Breast epithelium (tissue), 4 donors: ENCODE measurements at regions of chr7 and their contacts with region 1.

Region 1: DNA sequence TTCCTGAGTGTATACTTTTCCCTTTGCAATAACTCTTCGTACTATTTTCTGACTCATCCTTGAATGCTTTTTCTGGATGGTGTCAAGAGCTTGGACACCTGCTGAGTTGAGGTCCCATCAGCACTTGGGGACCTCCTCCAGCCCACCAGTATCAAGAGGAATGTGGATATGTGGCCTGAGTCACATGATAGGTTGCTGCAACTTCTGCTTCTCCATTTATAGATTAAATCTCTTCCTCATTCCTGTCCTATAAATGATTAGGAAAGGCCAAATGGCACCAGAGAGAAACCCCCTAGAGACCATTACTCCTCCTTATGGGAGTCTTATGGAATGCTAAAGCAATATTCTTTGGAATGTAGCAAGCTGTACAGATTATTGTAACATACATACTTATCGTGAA is 85.6 kb downstream of the NEUROD6 start:
- DNase-seq: no peak
- H3K4me3 ChIP-seq: no peak overlapping the region
- H3K27ac ChIP-seq: no peak overlapping the region
- H3K4me1 ChIP-seq: no peaks in the 10 kb centered on the region
- H3K27me3 ChIP-seq: no peaks in the 10 kb centered on the region
- CTCF ChIP-seq: no peak
- POLR2A ChIP-seq: no peak

Region 2: DNA sequence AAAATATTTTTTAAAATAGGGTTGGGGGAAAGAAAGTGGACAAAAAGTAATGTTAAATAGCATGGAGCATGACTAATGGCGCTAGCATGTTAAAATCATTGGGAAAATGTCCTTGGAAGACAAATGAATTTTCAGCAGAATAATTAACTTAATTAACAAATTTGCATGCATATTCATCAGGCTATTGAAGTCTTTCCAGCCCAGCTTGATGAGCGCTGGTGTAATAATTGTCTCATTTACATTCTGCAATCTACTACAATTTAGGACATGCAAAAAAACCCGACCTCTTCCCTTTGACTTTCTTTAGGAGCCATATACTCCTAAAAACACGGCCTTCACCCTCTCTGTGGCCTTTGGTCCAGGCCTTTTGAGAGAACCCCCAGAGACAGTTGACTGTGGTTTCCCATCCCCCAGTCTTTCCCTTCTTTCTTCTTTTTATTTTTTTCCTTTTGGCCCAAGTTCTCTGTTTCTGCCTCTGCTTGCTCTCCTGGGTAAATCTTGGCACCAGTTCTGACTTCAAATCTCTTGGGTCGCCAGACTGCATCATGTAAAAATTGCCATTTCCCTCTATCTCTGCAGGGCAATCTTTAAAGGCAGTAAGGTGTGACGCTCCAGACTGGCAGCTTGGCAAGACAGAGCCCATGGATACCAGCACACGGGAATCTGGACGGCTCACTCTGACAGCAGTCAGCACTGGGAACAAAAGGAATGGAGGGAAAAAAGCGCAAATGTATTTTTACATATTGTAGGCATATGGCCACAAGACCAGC is 19.9 kb before region 1 on chr7:
- intact Hi-C with region 1: no loop called
- DNase-seq: no peak
- H3K4me3 ChIP-seq: no peak overlapping the region
- H3K27ac ChIP-seq: no peak overlapping the region
- H3K4me1 ChIP-seq: no peaks in the 10 kb centered on the region
- H3K27me3 ChIP-seq: no peaks in the 10 kb centered on the region
- CTCF ChIP-seq: no peak
- POLR2A ChIP-seq: no peak

Region 3: GRCh38 chr7:31508823-31509222 is 253.9 kb after region 1 on chr7:
- intact Hi-C with region 1: loop called (anchors 5 kb)
- DNase-seq: no peak
- H3K4me3 ChIP-seq: no peak overlapping the region
- H3K27ac ChIP-seq: no peak overlapping the region
- H3K4me1 ChIP-seq: no peaks in the 10 kb centered on the region
- H3K27me3 ChIP-seq: no peaks in the 10 kb centered on the region
- CTCF ChIP-seq: no peak
- POLR2A ChIP-seq: no peak